Activated B cell treated with CpG ODN at 0.5 μM for 24 hours (primary cell): ENCODE measurements at regions of chr10 and their contacts with region 1.

Region 1: GRCh38 chr10:17737027-17737965 is 14.7 kb upstream of the TMEM236 start:
- DNase-seq: no peak
- ATAC-seq: no peak
- H3K4me3 Mint-ChIP-seq: no peak overlapping the region
- H3K27ac Mint-ChIP-seq: no peak overlapping the region
- H3K4me1 Mint-ChIP-seq: no peaks in the 10 kb centered on the region
- H3K27me3 Mint-ChIP-seq: no peaks in the 10 kb centered on the region
- CTCF ChIP-seq: peak; percentile 57

Region 2: GRCh38 chr10:17375936-17376584 is 361.2 kb before region 1 on chr10:
- CTCF ChIA-PET with region 1: no interaction called
- POLR2A ChIA-PET with region 1: no interaction called
- intact Hi-C with region 1: no loop called
- DNase-seq: no peak
- ATAC-seq: no peak
- H3K4me3 Mint-ChIP-seq: no peak overlapping the region
- H3K27ac Mint-ChIP-seq: no peak overlapping the region
- H3K4me1 Mint-ChIP-seq: no peaks in the 10 kb centered on the region
- H3K27me3 Mint-ChIP-seq: peaks cover 5% of the 10 kb centered on the region
- CTCF ChIP-seq: no peak

Region 3: DNA sequence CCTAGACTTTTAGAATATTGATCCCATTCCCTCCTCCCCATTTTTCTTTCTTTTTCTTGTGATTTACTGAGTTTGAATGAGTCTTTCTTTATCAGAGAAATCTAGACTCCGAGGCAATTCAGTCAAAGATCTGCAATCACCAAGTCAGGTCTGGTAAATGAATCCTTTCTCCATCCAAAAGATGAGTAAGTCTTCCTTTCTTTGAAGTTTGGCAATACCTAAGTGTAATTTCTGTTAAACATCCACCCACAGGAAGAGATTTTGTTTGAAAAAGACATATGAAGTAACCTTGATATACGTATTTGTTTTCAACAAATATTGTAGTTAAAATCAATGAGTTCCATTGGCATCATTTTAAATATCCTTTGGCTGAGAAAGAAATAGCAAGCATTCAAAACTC is 272.8 kb after region 1 on chr10:
- CTCF ChIA-PET with region 1: no interaction called
- POLR2A ChIA-PET with region 1: no interaction called
- intact Hi-C with region 1: no loop called
- DNase-seq: no peak
- ATAC-seq: no peak
- H3K4me3 Mint-ChIP-seq: no peak overlapping the region
- H3K27ac Mint-ChIP-seq: no peak overlapping the region
- H3K4me1 Mint-ChIP-seq: no peaks in the 10 kb centered on the region
- H3K27me3 Mint-ChIP-seq: peaks cover 6% of the 10 kb centered on the region
- CTCF ChIP-seq: no peak

Region 4: GRCh38 chr10:18104223-18104872 is 367.1 kb after region 1 on chr10:
- CTCF ChIA-PET with region 1: no interaction called
- POLR2A ChIA-PET with region 1: no interaction called
- intact Hi-C with region 1: loop called (anchors 2 kb)
- DNase-seq: no peak
- ATAC-seq: no peak
- H3K4me3 Mint-ChIP-seq: no peak overlapping the region
- H3K27ac Mint-ChIP-seq: no peak overlapping the region
- H3K4me1 Mint-ChIP-seq: no peaks in the 10 kb centered on the region
- H3K27me3 Mint-ChIP-seq: no peaks in the 10 kb centered on the region
- CTCF ChIP-seq: no peak

Region 5: DNA sequence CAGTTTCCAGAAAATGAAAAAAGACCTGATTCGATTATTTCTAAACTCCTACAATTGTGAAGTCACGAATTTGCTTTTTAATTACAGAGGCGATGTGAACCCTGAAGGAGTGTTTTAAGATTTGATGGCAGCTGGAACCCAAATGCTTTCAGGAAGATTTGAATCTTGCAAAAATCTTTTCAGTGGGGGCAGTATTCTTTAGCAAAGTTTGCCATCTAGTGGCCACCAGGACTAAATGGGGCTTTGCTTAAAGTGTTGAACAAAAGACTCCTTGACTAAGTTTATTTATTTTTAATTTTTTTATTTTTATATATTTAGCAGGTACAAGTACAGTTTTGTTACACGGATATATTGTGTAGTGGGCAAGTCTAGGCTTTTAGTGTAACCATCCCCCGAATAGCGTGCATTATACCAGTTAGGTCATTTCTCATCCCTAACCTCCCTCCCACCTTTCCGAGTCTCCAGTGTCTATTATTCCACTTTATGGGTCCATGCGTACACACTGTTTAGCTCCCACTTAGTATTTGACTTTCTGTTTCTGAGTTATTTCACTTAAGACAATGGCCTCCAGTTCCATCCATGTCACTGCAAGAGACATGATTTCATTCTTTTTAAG is 501.7 kb after region 1 on chr10:
- CTCF ChIA-PET with region 1: no interaction called
- POLR2A ChIA-PET with region 1: no interaction called
- intact Hi-C with region 1: loop called (anchors 1 kb)
- DNase-seq: no peak
- ATAC-seq: no peak
- H3K4me3 Mint-ChIP-seq: no peak overlapping the region
- H3K27ac Mint-ChIP-seq: no peak overlapping the region
- H3K4me1 Mint-ChIP-seq: no peaks in the 10 kb centered on the region
- H3K27me3 Mint-ChIP-seq: peaks cover 1% of the 10 kb centered on the region
- CTCF ChIP-seq: no peak

Region 6: DNA sequence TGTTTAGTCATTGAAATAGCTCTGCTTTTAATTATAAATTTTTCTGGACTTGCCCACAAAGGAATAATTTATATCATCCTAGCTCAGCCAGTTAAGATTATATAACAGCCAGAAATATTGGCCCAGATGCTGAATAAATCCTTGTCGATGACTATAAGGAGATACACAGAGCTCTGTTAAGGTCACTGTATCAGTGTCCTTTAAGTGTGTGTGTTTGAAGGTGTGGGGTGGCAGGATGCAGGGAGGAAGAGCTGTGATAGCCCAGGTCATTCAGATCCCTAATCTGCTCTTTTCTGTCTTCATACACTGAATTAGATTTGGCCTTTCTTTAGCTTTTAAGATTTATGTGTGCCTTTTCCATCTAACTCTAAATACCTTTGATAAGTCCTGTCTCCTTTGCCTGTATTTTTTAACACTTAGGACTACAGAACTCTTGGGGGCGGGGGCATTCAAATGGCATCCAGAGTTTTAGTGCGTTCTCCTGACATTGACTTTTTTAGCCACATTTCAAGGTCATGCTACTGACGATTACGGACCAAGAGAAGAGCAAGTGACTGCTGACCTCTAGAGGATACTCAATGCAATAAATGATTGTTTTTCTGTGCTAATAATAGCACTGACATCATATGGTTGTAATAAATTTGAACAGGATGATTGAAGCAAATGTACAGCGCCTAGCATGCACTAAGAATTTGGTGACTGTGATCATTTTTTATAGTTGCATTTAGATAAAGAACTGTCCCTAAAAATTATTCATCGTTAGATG is 575.3 kb after region 1 on chr10:
- CTCF ChIA-PET with region 1: no interaction called
- POLR2A ChIA-PET with region 1: no interaction called
- intact Hi-C with region 1: loop called (anchors 2 kb)
- DNase-seq: no peak
- ATAC-seq: peak; percentile 50
- H3K4me3 Mint-ChIP-seq: no peak overlapping the region
- H3K27ac Mint-ChIP-seq: no peak overlapping the region
- H3K4me1 Mint-ChIP-seq: no peaks in the 10 kb centered on the region
- H3K27me3 Mint-ChIP-seq: peaks cover 3% of the 10 kb centered on the region
- CTCF ChIP-seq: no peak